ENCODE measurements at regions of chr11 and their contacts with region 1.

Region 1: GRCh38 chr11:74069147-74070047 is 60.5 kb upstream of the UCP3 start:
- DNase-seq: no peak
- ATAC-seq: no peak
- H3K4me3 Mint-ChIP-seq: no peak overlapping the region
- H3K27ac Mint-ChIP-seq: no peak overlapping the region
- H3K4me1 Mint-ChIP-seq: peaks cover 8% of the 10 kb centered on the region
- H3K27me3 Mint-ChIP-seq: no peaks in the 10 kb centered on the region

Region 2: GRCh38 chr11:74037309-74037708 is 32.1 kb before region 1 on chr11:
- CTCF ChIA-PET with region 1: no interaction called
- POLR2A ChIA-PET with region 1: no interaction called
- intact Hi-C with region 1: no loop called
- DNase-seq: no peak
- ATAC-seq: no peak
- H3K4me3 Mint-ChIP-seq: no peak overlapping the region
- H3K27ac Mint-ChIP-seq: no peak overlapping the region
- H3K4me1 Mint-ChIP-seq: no peaks in the 10 kb centered on the region
- H3K27me3 Mint-ChIP-seq: no peaks in the 10 kb centered on the region

Region 3: DNA sequence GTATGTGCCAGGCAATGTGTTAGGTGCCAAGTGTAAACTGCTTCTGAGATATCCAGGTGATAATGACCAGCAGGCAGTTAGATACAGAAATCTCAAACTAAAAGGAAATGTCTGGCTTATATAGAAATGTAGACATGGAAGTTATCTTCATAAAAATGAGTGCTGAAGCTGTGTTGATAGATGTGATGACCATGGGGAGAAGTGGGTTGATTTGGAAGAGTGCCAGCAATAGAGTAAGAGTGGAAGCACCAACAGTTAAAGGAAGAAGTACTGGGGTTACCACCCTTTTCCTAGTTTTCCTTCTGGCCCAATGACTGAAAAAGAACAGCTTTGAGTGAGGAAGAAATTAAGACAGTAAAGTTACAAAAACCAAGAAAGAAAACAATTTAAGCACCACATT is 32.9 kb after region 1 on chr11:
- CTCF ChIA-PET with region 1: no interaction called
- POLR2A ChIA-PET with region 1: interaction called, 10 read pairs
- intact Hi-C with region 1: no loop called
- DNase-seq: no peak
- ATAC-seq: no peak
- H3K4me3 Mint-ChIP-seq: no peak overlapping the region
- H3K27ac Mint-ChIP-seq: no peak overlapping the region
- H3K4me1 Mint-ChIP-seq: no peaks in the 10 kb centered on the region
- H3K27me3 Mint-ChIP-seq: no peaks in the 10 kb centered on the region